Right cardiac atrium (tissue), 5 donors: ENCODE measurements at regions of chr12 and their contacts with region 1.

Region 1: GRCh38 chr12:53344824-53345485 is 8.8 kb upstream of the SP7 start:
- DNase-seq: peak; percentile 81 to 93 (median 91)
- ATAC-seq: peak; percentile 92 to 93
- H3K4me3 ChIP-seq: peak overlapping the region; percentile 73
- H3K27ac ChIP-seq: peak overlapping the region; percentile 51
- H3K4me1 ChIP-seq: no peaks in the 10 kb centered on the region
- H3K27me3 ChIP-seq: no peaks in the 10 kb centered on the region

Region 2: DNA sequence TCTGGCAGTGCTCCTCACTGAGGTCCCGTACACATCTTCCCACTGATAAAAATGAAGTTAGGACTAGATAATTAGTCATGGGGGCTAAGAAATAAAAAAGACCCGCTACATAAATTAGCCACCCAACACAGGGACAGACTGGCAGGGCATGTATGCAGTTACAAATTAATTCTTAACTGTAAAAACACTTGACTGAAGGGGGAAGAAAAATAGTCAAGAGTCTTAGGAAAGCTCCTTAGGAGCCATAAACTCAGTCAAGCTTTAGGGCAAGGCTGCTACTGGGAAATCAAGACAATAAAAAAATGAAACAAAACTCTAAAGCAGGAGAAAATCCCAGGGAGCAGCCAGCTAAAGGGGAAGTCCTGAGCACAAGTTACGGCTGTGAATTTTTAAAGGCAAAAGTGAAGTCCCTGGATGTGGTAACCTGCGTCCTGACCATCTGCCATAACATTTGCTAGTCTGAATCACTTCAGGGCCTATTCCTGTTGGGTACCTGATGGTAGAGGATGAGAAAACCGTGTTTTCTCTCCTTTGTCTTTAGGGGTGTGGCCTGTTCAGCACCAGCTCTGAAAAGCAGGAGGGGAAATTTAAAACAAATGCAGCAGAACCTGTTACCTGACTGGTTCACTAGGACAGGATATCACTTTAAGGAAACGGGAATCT is 169.8 kb after region 1 on chr12:
- intact Hi-C with region 1: loop called in 3 of 4 experiments (anchors 5 kb)
- DNase-seq: no peak
- ATAC-seq: no peak
- H3K4me3 ChIP-seq: no peak overlapping the region
- H3K27ac ChIP-seq: no peak overlapping the region
- H3K4me1 ChIP-seq: no peaks in the 10 kb centered on the region
- H3K27me3 ChIP-seq: no peaks in the 10 kb centered on the region

Region 3: DNA sequence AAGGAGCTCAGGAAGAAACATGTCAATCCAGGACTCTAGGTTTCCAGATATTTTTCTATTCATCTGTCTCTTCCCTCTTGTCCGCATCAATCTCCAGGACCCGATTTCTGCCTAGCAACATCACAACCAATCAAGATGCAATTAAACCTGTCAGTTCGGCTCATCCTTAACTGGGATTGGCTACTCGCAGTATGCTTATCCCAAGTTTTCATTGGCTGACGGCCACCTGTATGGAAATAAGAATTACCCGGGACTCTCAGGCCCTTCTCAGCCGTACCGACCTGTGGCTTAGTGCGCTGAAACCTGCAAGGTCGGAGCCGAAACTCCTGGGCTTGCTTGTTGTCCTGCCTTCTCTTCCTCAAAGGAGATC is 351.3 kb after region 1 on chr12:
- intact Hi-C with region 1: no loop called
- DNase-seq: peak in 2 of 3 donors; percentile 44 to 62
- ATAC-seq: peak; percentile 87 to 90
- H3K4me3 ChIP-seq: peak overlapping the region; percentile 65
- H3K27ac ChIP-seq: no peak overlapping the region
- H3K4me1 ChIP-seq: peaks cover 4% of the 10 kb centered on the region
- H3K27me3 ChIP-seq: no peaks in the 10 kb centered on the region